Panc1 (cell line): ENCODE measurements at regions of chr12 and their contacts with region 1.

Region 1: DNA sequence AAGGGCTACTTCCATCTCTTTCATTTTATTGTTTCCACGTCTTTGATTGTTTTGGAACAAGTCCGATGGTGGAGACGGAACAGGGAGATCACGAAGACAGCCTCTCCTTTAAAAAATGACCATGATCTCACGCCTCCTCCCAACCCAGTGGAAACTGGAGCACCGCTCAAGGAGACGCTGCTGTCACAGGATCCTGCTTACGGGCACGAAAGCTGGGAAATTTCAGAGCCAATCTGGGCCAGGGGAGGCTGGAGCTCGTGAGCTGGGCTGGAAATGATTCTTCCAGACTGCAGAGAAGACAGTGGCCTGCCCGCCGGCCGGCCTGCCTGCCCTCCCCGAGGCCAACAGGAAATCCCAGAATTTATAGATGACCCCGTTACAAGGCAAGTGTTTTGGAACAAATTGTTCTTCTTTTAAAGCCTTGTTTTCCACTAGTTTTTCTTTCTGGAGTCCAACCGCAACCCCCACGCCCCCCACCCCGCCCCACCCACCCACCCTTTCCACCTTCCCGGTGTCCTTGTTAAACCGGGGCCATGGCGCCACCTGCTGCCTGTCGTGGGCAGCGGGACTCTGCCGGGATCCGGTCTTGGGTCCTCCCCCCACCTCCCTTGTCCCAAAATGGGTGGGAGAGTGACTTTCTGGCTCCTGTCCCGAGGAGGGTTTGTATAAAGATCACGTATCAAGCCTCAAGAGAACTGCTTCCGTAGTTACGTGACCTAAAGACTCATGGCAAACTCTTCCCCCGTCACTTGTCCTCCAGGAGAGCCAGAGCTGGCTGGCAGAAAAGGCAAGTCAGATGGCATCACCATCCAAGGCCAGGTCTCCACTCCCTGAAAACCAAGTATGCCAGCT is 40.3 kb downstream of the MAP1LC3B2 start:
- DNase-seq: no peak
- ATAC-seq: peak; percentile 89
- H3K4me3 ChIP-seq: peak overlapping the region in 1 of 2 experiments; percentile 26; a peak in 1 of 4 replicates
- H3K27ac ChIP-seq: peak overlapping the region; percentile 72
- H3K4me1 ChIP-seq: peaks cover 28% of the 10 kb centered on the region
- H3K27me3 ChIP-seq: no peaks in the 10 kb centered on the region
- CTCF ChIP-seq: peak; percentile 81

Region 2: GRCh38 chr12:116257215-116257614 is 342.3 kb before region 1 on chr12:
- CTCF ChIA-PET with region 1: interaction called, 14 read pairs
- POLR2A ChIA-PET with region 1: no interaction called
- in situ Hi-C with region 1: no loop called
- intact Hi-C with region 1: no loop called
- DNase-seq: no peak
- ATAC-seq: peak; percentile 92
- H3K4me3 ChIP-seq: no peak overlapping the region
- H3K27ac ChIP-seq: peak overlapping the region; percentile 68; the same call in 1 of the 2 replicates
- H3K4me1 ChIP-seq: peaks cover 61% of the 10 kb centered on the region
- H3K27me3 ChIP-seq: no peaks in the 10 kb centered on the region
- CTCF ChIP-seq: no peak

Region 3: GRCh38 chr12:116455540-116456329 is 143.8 kb before region 1 on chr12:
- CTCF ChIA-PET with region 1: no interaction called
- POLR2A ChIA-PET with region 1: no interaction called
- in situ Hi-C with region 1: no loop called
- intact Hi-C with region 1: loop called (anchors 10 kb)
- DNase-seq: no peak
- ATAC-seq: peak; percentile 62
- H3K4me3 ChIP-seq: peak overlapping the region in 1 of 2 experiments; percentile 40; a peak in 2 of 4 replicates
- H3K27ac ChIP-seq: peak overlapping the region; percentile 97
- H3K4me1 ChIP-seq: peaks cover 51% of the 10 kb centered on the region
- H3K27me3 ChIP-seq: no peaks in the 10 kb centered on the region
- CTCF ChIP-seq: no peak

Region 4: DNA sequence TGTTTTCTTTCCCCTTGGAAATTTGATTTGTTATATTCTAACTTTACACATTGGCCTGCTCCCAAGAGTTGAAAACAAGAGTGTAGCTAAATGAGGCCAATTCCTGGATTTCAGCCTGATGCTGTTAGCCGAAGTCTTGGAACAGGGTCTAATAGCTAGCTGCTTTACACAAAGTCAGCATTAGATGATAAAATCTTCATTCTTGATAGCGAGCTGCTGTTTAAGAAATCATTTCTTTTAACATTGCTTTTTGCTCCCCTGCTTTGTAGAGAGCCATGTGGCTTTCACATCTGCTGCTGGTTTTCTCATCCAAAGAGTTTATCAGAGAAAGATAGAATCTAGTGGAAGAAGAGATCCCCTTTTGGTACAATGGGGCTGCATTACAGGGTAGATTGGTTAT is 333.6 kb after region 1 on chr12:
- CTCF ChIA-PET with region 1: no interaction called
- POLR2A ChIA-PET with region 1: no interaction called
- in situ Hi-C with region 1: no loop called
- intact Hi-C with region 1: no loop called
- DNase-seq: no peak
- ATAC-seq: no peak
- H3K4me3 ChIP-seq: no peak overlapping the region
- H3K27ac ChIP-seq: no peak overlapping the region
- H3K4me1 ChIP-seq: no peaks in the 10 kb centered on the region
- H3K27me3 ChIP-seq: no peaks in the 10 kb centered on the region
- CTCF ChIP-seq: no peak